Activated CD4-positive, alpha-beta memory T cell treated with anti-CD3 and anti-CD28 coated beads for 36 hours (primary cell): ENCODE measurements at regions of chrX and their contacts with region 1.

Region 1: GRCh38 chrX:153609917-153610428 is 11.0 kb upstream of the CCNQ start:
- DNase-seq: peak; percentile 82
- H3K4me3 Mint-ChIP-seq: peak overlapping the region; percentile 71
- H3K27ac Mint-ChIP-seq: no peak overlapping the region
- H3K4me1 Mint-ChIP-seq: peaks cover 9% of the 10 kb centered on the region
- H3K27me3 Mint-ChIP-seq: no peaks in the 10 kb centered on the region

Region 2: GRCh38 chrX:153599192-153600031 is 10.6 kb before region 1 on chrX:
- CTCF ChIA-PET with region 1: interaction called, 38 read pairs
- POLR2A ChIA-PET with region 1: interaction called, 4 read pairs
- intact Hi-C with region 1: no loop called
- DNase-seq: peak; percentile 91
- H3K4me3 Mint-ChIP-seq: peak overlapping the region; percentile 82
- H3K27ac Mint-ChIP-seq: peak overlapping the region; percentile 60
- H3K4me1 Mint-ChIP-seq: peaks cover 41% of the 10 kb centered on the region
- H3K27me3 Mint-ChIP-seq: no peaks in the 10 kb centered on the region

Region 3: DNA sequence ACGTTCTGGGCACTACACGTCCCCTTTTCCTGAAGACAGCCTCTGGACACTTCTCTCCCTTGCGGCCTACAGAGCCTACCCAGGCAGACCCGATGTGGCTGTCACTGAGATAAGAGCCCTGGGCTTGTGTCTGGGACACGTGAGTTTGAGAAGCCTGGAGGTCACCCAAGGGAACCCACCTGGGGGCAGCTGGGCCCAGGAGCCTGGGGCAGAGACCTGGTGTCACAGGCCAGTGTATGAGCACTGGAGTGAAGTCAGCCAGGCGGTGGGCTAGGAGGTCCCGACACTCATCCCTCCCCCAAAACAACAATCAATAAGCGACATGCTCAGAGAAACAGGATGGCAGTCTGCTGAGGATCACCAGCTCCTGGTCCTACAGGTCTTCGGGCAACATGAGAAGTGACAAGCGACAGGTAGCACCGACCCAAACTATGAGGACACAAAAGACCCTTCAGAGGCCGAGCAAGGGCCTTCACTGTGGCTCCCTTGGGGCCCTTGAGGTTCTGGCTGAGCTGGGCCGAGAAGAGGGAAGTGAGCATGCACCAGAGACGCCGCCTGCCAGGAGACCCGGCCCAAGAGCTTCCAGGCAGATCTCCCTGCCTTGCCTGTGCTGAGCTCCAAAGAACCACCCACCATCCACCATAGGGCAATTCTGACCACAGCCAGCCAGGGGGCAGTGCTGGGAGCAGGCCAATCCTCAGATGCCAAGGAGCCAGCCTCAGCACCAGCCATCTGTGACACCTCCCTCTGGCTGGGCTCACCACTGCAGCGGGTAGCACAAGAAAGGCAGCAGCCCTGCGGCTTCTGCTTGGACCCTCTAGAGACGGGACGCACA is 26.0 kb after region 1 on chrX:
- CTCF ChIA-PET with region 1: interaction called, 11 read pairs
- POLR2A ChIA-PET with region 1: no interaction called
- intact Hi-C with region 1: no loop called
- DNase-seq: peak; percentile 35
- H3K4me3 Mint-ChIP-seq: no peak overlapping the region
- H3K27ac Mint-ChIP-seq: no peak overlapping the region
- H3K4me1 Mint-ChIP-seq: no peaks in the 10 kb centered on the region
- H3K27me3 Mint-ChIP-seq: peaks cover 2% of the 10 kb centered on the region

Region 4: DNA sequence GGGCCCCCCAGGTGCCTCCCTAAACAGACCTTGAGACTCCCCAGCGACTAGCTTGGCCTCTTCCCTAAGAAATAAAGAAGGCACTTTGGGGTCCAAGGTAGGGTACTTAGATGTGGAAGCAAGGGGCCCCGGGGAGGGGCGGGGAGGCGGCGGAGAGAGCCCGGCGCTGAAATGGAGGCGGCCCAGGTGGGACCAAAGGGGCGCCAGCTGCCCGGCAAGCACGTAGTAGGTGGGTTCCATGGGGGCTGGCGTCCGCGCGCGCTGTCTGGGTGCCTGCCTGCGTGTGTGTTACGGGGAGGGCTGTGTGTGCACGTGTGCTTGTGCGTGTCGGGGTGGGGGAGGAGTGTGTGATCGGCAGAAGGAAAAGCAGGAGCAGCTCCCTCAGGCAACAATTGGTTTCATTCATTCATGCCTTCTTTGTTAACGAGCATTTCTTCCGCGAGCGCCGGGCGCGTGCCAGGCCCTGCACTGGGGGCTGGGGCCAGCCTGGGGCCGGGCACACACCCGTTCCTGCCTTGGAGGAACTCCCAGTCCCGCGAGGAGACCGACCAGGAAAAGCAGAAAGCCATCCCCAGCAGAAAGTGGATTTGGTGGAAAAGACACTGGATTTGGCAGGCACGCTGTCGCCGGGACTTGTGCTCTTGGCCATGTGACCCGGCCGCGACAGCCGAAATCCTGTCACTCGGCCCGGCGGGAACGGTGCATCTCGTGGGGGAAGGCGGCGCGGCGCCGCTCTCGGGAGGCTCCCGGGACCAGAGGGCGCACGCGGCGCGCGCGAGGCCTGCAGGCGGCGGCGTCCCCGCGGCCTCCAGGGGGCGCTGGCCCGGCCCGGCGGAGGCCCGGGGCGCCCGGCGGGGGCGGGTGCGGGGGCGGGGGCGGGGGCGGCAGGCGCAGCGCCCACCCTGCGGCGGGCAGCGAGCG is 33.7 kb after region 1 on chrX:
- CTCF ChIA-PET with region 1: interaction called, 17 read pairs
- POLR2A ChIA-PET with region 1: no interaction called
- intact Hi-C with region 1: loop called (anchors 5 kb)
- DNase-seq: no peak
- H3K4me3 Mint-ChIP-seq: no peak overlapping the region
- H3K27ac Mint-ChIP-seq: no peak overlapping the region
- H3K4me1 Mint-ChIP-seq: peaks cover 9% of the 10 kb centered on the region
- H3K27me3 Mint-ChIP-seq: peaks cover 36% of the 10 kb centered on the region

Region 5: DNA sequence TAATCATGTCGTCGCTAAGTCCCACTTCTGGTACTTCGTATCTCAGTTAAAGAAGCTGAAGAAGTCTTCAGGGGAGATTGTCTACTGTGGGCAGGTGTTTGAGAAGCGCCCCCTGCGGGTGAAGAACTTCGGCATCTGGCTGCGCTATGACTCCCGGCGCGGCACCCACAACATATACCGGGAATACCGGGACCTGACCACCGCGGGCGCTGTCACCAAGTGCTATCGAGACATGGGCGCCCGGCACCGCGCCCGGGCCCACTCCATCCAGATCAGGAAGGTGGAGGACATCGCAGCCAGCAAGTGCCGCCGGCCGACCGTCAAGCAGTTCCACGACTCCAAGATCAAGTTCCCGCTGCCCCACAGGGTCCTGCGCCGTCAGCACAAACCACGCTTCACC is 52.3 kb after region 1 on chrX:
- CTCF ChIA-PET with region 1: interaction called, 35 read pairs
- POLR2A ChIA-PET with region 1: no interaction called
- intact Hi-C with region 1: loop called (anchors 2 kb)
- DNase-seq: peak; percentile 66
- H3K4me3 Mint-ChIP-seq: peak overlapping the region; percentile 59
- H3K27ac Mint-ChIP-seq: no peak overlapping the region
- H3K4me1 Mint-ChIP-seq: no peaks in the 10 kb centered on the region
- H3K27me3 Mint-ChIP-seq: peaks cover 5% of the 10 kb centered on the region

Region 6: GRCh38 chrX:154040307-154040756 is 430.4 kb after region 1 on chrX:
- CTCF ChIA-PET with region 1: no interaction called
- POLR2A ChIA-PET with region 1: no interaction called
- intact Hi-C with region 1: no loop called
- DNase-seq: no peak
- H3K4me3 Mint-ChIP-seq: no peak overlapping the region
- H3K27ac Mint-ChIP-seq: peak overlapping the region; percentile 58
- H3K4me1 Mint-ChIP-seq: peaks cover 46% of the 10 kb centered on the region
- H3K27me3 Mint-ChIP-seq: no peaks in the 10 kb centered on the region